Activated CD4-positive, alpha-beta T cell treated with anti-CD3 and anti-CD28 coated beads, Interleukin-2, amount 10 ng/mL, durations not matched to agents 24 days and 14 days (primary cell): ENCODE measurements at regions of chr5 and their contacts with region 1.

Region 1: DNA sequence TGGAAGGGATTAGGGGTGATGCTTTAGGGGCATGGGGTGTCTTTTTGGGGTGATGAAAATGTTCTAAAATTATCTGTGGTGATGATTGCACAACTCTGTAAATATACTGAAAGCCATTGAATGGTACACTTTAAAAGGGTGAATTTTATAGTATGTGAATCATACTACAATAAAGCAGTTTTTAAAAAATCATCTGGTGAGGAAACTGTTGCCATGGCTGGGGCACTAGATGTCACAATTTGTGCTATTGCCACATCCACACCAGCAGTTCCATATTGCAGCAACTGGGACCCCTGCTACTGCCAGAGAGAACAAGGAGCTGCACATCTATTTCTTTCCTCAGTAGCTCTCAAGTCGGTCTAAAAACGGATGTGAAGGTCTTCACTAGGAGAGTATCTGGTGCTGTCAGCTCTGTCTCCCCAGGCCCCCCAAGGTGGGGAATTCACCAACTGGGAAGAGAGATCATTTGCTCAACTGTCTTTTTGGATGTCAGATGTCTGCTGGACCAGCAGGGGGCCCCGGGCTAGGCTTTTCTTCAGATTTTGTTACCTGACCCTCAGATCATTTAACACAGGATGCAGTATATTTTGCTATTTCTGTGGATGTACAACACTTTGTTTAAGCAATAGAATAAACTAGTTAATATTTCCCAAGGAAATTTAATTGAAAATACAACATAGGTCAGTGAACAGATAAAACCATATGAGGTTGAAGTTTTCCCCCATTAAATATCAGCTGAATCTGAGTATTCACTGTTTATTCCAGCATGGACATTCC is 13.2 kb downstream of the CMYA5 start:
- DNase-seq: peak; percentile 77
- H3K4me3 Mint-ChIP-seq: no peak overlapping the region
- H3K27ac Mint-ChIP-seq: no peak overlapping the region
- H3K4me1 Mint-ChIP-seq: peaks cover 18% of the 10 kb centered on the region
- H3K27me3 Mint-ChIP-seq: no peaks in the 10 kb centered on the region

Region 2: DNA sequence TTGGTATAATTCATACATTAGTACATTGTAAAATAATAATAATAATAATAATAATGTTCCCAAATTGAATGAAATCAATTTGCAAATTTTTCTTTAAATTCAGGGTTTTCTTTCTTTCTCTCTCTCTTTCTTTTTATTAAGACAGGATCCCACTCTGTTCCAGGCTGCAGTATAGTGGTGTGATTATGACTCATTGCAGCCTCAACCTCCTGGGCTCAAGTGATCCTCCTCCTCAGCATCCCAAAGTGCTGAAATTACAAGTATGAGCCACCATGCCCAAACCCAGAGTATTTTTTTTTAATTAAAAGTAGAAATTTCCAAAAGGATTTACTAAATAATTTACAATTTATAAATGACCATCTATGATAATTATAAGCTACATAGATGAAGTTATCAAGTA is 306.5 kb before region 1 on chr5:
- intact Hi-C with region 1: no loop called
- DNase-seq: no peak
- H3K4me3 Mint-ChIP-seq: no peak overlapping the region
- H3K27ac Mint-ChIP-seq: no peak overlapping the region
- H3K4me1 Mint-ChIP-seq: no peaks in the 10 kb centered on the region
- H3K27me3 Mint-ChIP-seq: no peaks in the 10 kb centered on the region

Region 3: GRCh38 chr5:79857714-79858409 is 155.1 kb after region 1 on chr5:
- intact Hi-C with region 1: loop called (anchors 1 kb)
- DNase-seq: peak; percentile 94
- H3K4me3 Mint-ChIP-seq: no peak overlapping the region
- H3K27ac Mint-ChIP-seq: no peak overlapping the region
- H3K4me1 Mint-ChIP-seq: peaks cover 9% of the 10 kb centered on the region
- H3K27me3 Mint-ChIP-seq: peaks cover 17% of the 10 kb centered on the region